ENCODE measurements at regions of chr15 and their contacts with region 1.

Region 1: GRCh38 chr15:39953521-39953920 is 19.6 kb downstream of the EIF2AK4 start:
- DNase-seq: no peak
- ATAC-seq: no peak
- H3K4me3 ChIP-seq: no peak overlapping the region
- H3K27ac ChIP-seq: no peak overlapping the region
- H3K4me1 ChIP-seq: no peaks in the 10 kb centered on the region; the same call in 1 of the 2 replicates
- H3K27me3 ChIP-seq: no peaks in the 10 kb centered on the region
- CTCF ChIP-seq: no peak
- POLR2A ChIP-seq: no peak
- RAD21 ChIP-seq: no peak

Region 2: GRCh38 chr15:39997031-39997430 is 43.5 kb after region 1 on chr15:
- CTCF ChIA-PET with region 1: no interaction called
- POLR2A ChIA-PET with region 1: no interaction called
- dilution Hi-C with region 1: no loop called
- in situ Hi-C with region 1: no loop called
- intact Hi-C with region 1: loop called (anchors 5 kb)
- DNase-seq: peak; percentile 56
- ATAC-seq: peak; percentile 78
- H3K4me3 ChIP-seq: no peak overlapping the region
- H3K27ac ChIP-seq: peak overlapping the region; percentile 37; the same call in 1 of the 2 replicates
- H3K4me1 ChIP-seq: peaks cover 6% of the 10 kb centered on the region; the same call in 1 of the 2 replicates
- H3K27me3 ChIP-seq: no peaks in the 10 kb centered on the region
- CTCF ChIP-seq: no peak
- POLR2A ChIP-seq: no peak
- RAD21 ChIP-seq: no peak